GM12878 (cell line): ENCODE measurements at regions of chr4 and their contacts with region 1.

Region 1: DNA sequence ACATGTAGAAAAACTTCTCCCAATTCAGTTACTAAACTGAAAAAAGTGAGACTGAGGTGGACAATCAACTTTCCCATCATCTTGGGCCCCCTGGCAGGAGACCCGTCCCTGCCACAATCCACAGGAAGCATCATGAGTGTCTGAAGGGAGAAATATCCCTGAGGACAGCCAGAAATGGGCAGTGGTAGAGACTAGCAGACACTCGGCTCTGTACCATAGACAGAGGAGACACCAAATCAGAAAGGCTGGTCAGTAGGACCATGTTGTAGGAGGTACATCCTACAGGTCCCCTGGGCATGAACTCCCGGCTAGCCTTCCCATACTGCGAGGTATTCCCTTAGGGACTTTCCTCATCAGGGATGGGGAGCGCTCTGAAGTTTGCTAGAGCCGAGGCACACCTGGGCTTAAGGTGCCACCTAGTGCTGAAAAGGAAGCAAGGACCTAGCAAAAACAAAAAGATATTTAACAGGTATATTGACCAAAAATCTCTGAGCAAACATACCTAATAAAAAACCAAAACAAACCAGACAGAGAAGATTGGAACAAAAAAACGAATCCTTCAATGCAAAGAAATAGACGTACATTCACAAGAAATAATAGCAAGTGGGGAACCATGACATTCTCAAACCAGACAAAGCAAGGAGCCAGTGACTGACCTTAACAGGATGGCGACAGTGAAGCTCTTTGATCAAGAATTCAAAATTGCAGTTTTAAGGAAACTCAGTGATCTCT is 55.6 kb downstream of the HAUS3 start:
- DNase-seq: no peak
- ATAC-seq: peak; percentile 74
- H3K4me3 ChIP-seq: no peak overlapping the region
- H3K27ac ChIP-seq: no peak overlapping the region
- H3K4me1 ChIP-seq: no peaks in the 10 kb centered on the region
- H3K27me3 ChIP-seq: no peaks in the 10 kb centered on the region
- CTCF ChIP-seq: peak; percentile 42 to 55 (median 47)
- EP300 ChIP-seq: no peak
- POLR2A ChIP-seq: no peak
- RAD21 ChIP-seq: peak; percentile 76

Region 2: DNA sequence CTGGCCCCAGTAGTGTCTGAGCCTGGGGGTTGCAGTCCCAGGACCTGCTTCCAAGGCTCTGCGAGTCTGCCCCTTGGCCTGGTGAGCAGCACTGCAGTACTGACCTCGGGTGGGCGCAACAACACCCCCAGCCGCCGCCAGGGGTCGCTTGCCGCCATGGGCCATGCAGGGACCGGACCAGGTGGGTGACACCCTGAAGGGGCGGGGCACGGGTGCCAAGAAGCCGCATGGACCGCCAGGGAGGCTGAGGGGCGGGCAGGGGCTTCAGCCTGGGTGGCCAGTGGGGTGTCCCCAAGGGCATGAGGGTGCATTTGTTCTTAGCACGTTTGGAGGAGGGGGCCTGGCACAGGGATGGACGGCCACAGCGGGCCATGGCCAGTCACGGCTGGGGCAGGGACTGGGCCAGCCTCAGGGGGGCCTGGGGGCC is 440.0 kb before region 1 on chr4:
- CTCF ChIA-PET with region 1: no interaction called
- POLR2A ChIA-PET with region 1: no interaction called
- RAD21 ChIA-PET with region 1: no interaction called
- SMC1A ChIA-PET with region 1: no interaction called
- in situ Hi-C with region 1: no loop called
- intact Hi-C with region 1: loop called (anchors 5 kb)
- DNase-seq: no peak
- ATAC-seq: peak; percentile 93
- H3K4me3 ChIP-seq: no peak overlapping the region
- H3K27ac ChIP-seq: no peak overlapping the region
- H3K4me1 ChIP-seq: no peaks in the 10 kb centered on the region
- H3K27me3 ChIP-seq: no peaks in the 10 kb centered on the region
- CTCF ChIP-seq: peak; percentile 65 to 93 (median 78)
- EP300 ChIP-seq: no peak
- POLR2A ChIP-seq: no peak
- RAD21 ChIP-seq: peak; percentile 69

Region 3: GRCh38 chr4:1910643-1911042 is 275.7 kb before region 1 on chr4:
- CTCF ChIA-PET with region 1: interaction called, 4 read pairs
- POLR2A ChIA-PET with region 1: no interaction called
- RAD21 ChIA-PET with region 1: no interaction called
- SMC1A ChIA-PET with region 1: no interaction called
- in situ Hi-C with region 1: no loop called
- intact Hi-C with region 1: loop called (anchors 5 kb)
- DNase-seq: no peak
- ATAC-seq: peak; percentile 53; the same call in 2 of the 3 replicates
- H3K4me3 ChIP-seq: no peak overlapping the region
- H3K27ac ChIP-seq: no peak overlapping the region
- H3K4me1 ChIP-seq: no peaks in the 10 kb centered on the region
- H3K27me3 ChIP-seq: no peaks in the 10 kb centered on the region
- CTCF ChIP-seq: peak; percentile 44 to 54 (median 53); a peak in 5 of 6 replicates
- EP300 ChIP-seq: no peak
- POLR2A ChIP-seq: no peak
- RAD21 ChIP-seq: peak; percentile 64

Region 4: GRCh38 chr4:1922821-1923220 is 263.5 kb before region 1 on chr4:
- CTCF ChIA-PET with region 1: no interaction called
- POLR2A ChIA-PET with region 1: no interaction called
- RAD21 ChIA-PET with region 1: no interaction called
- SMC1A ChIA-PET with region 1: no interaction called
- in situ Hi-C with region 1: no loop called
- intact Hi-C with region 1: loop called (anchors 5 kb)
- DNase-seq: no peak
- ATAC-seq: no peak
- H3K4me3 ChIP-seq: no peak overlapping the region
- H3K27ac ChIP-seq: no peak overlapping the region
- H3K4me1 ChIP-seq: no peaks in the 10 kb centered on the region
- H3K27me3 ChIP-seq: no peaks in the 10 kb centered on the region
- CTCF ChIP-seq: no peak
- EP300 ChIP-seq: no peak
- POLR2A ChIP-seq: peak; percentile 12; the same call in 1 of the 2 replicates
- RAD21 ChIP-seq: no peak

Region 5: DNA sequence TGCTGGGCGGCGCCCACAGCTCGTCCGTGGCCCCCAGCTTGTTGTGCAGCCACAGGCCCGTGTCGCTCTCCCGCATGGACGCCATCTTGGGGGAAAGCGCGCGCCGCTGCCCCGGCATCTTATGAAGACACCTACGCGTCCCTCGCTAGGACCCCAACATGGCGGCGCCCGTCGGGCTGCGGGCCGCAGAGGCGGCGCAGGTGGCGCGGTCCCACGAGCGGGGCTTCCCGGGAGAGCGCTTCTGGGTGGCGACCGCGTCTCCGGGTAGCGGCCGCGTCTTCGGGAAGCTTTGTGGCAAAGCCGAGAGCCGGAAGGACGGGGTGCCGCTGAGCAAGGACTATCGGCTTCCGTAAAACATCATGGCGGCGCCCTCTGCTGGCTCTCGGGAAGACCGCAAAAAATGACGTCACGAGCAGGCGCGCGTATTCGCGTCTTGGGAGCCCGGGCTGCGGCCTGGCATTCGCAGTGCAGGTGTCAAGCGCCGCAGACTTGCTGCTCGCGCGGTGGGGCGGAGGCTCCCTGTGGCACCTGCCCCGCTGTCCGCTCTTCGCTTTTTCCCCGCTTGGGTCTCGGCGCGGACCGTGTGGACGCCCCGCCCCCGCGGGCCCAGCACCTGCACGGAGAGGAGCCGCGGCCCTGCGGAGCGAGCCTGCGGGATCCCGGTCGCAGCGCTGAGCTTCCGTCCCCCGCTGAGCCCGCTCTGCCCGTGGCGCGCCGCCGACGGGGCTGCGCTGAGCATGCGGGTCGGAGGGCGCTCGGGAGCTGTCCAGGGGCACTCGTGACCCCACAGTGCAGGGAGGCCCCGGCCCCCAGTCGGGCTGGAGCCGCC is 177.2 kb before region 1 on chr4 and contains the start of gene NELFA:
- CTCF ChIA-PET with region 1: no interaction called
- POLR2A ChIA-PET with region 1: no interaction called
- RAD21 ChIA-PET with region 1: no interaction called
- SMC1A ChIA-PET with region 1: no interaction called
- in situ Hi-C with region 1: no loop called
- intact Hi-C with region 1: loop called (anchors 10 kb)
- DNase-seq: peak; percentile 57
- ATAC-seq: peak; percentile 90
- H3K4me3 ChIP-seq: peak within 1 kb of the TSS; percentile 95
- H3K27ac ChIP-seq: peak within 1 kb of the TSS; percentile 94
- H3K4me1 ChIP-seq: peaks cover 5% of the 10 kb centered on the region
- H3K27me3 ChIP-seq: no peaks in the 10 kb centered on the region
- CTCF ChIP-seq: peak in 2 of 3 experiments; percentile 1 to 30; a peak in 2 of 6 replicates
- EP300 ChIP-seq: no peak
- POLR2A ChIP-seq: peak; percentile 90
- RAD21 ChIP-seq: no peak
- polyA plus RNA-seq, gene NELFA: 0.39 to 2.2 TPM